ENCODE measurements at regions of chr5 and their contacts with region 1.

Region 1: DNA sequence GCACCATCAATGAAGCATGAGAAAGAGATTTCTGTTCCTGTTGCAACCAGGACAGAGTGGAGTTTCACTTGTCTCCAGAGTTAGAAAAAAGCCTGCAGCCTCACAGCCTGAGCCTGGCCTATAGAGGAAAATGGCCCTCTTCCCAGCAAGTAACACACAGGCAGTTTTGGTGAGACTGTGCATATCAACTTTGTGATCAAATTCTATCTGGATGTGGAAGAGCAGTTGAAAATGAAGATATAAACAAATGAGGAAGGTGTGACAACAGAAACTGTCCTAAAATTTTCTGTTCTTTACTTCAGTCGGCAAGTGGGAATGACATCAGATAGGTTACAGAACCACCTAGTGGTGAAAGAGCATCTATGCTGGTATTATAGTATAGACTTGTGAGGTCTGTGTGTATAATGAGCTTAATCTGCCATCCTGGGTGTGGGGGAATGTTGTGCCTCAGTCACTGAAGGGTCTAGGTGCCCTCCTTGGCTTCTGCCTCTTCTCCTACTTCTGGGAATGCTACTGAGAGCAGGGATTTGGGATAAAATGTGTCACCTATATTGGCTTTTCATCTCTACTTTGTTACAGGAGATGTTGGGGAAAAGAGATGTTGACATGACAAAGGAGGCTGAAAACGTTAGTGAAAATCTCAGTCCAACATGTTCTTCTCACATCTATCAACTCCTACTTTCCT is 28.2 kb downstream of the YIPF5 start:
- H3K4me3 ChIP-seq: no peak overlapping the region
- H3K27ac ChIP-seq: no peak overlapping the region
- H3K4me1 ChIP-seq: peaks cover 11% of the 10 kb centered on the region; the same call in 1 of the 2 replicates
- CTCF ChIP-seq: peak; percentile 65

Region 2: DNA sequence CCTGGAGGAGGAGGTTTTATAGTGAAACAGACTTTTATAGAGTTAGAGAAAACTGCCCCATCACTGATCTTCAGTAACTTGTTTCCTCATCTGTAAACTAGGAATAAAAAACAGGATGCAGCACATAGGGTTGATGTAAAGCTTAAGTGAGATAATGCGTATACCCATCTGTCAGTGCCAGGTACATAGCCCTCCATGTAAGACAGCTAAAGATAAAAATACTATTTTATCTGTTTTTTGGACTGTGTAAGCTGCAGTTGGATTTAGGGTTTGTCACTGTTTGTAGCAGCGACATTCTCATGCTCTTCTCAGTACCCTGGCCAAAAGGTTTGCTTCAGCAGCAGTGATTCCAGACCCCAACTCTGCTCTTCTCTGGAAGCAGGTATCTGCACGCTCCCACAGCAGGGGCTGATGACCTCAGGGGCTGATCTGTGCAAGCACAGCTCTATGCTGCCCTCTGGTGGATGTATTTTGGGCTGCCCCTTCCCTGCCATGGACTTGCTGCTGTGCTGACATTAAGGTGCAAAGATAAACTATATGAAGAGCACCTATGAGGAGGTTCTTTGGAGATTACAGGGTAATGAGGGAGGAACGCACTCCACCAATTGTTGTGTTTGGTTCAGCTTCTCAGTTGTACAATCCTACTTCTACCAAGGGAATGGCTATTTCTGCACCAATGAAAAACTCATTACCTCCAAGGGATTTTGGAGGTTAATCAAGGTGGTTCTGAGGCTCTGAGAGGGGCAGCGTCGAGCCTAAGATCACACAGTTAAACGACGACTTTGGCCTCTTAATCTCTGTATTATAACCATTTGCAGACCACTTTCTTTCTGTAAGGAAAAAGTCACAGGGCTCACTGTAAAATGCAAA is 317.2 kb before region 1 on chr5:
- CTCF ChIA-PET with region 1: interaction called, 24 read pairs
- POLR2A ChIA-PET with region 1: no interaction called
- H3K4me3 ChIP-seq: no peak overlapping the region
- H3K27ac ChIP-seq: no peak overlapping the region
- H3K4me1 ChIP-seq: peaks cover 11% of the 10 kb centered on the region
- CTCF ChIP-seq: peak; percentile 83

Region 3: DNA sequence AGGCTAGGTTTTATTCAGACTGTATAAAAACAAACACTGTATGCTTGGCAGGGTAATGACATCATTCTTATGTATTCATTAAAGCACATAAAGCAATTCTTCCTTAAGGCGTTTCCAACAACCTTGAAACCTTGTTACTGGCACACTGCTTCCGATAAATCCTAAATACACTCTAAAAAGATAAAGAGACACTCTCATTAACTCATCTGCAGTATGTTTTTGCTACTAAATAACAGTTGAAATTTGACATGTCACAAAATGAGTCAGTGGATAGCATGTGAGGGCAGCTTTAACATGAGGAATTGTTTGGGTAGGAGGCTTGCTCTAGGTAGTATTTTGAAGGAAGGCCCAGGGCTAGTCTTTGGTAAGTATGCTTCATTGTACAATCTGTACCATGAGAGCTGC is 14.5 kb after region 1 on chr5:
- CTCF ChIA-PET with region 1: interaction called, 10 read pairs
- POLR2A ChIA-PET with region 1: no interaction called
- H3K4me3 ChIP-seq: no peak overlapping the region
- H3K27ac ChIP-seq: peak overlapping the region; percentile 44; the same call in 1 of the 2 replicates
- H3K4me1 ChIP-seq: peaks cover 16% of the 10 kb centered on the region
- CTCF ChIP-seq: no peak

Region 4: GRCh38 chr5:144191998-144192397 is 49.7 kb after region 1 on chr5:
- CTCF ChIA-PET with region 1: interaction called, 10 read pairs
- POLR2A ChIA-PET with region 1: no interaction called
- H3K4me3 ChIP-seq: no peak overlapping the region
- H3K27ac ChIP-seq: no peak overlapping the region
- H3K4me1 ChIP-seq: peaks cover 32% of the 10 kb centered on the region
- CTCF ChIP-seq: 0 out of 2 replicates have a peak, but pooled peaks have one; percentile 20

Region 5: GRCh38 chr5:144421428-144421827 is 279.1 kb after region 1 on chr5:
- CTCF ChIA-PET with region 1: no interaction called
- POLR2A ChIA-PET with region 1: no interaction called
- H3K4me3 ChIP-seq: no peak overlapping the region
- H3K27ac ChIP-seq: no peak overlapping the region
- H3K4me1 ChIP-seq: no peaks in the 10 kb centered on the region
- CTCF ChIP-seq: no peak